ENCODE measurements at regions of chr12 and their contacts with region 1.

Region 1: DNA sequence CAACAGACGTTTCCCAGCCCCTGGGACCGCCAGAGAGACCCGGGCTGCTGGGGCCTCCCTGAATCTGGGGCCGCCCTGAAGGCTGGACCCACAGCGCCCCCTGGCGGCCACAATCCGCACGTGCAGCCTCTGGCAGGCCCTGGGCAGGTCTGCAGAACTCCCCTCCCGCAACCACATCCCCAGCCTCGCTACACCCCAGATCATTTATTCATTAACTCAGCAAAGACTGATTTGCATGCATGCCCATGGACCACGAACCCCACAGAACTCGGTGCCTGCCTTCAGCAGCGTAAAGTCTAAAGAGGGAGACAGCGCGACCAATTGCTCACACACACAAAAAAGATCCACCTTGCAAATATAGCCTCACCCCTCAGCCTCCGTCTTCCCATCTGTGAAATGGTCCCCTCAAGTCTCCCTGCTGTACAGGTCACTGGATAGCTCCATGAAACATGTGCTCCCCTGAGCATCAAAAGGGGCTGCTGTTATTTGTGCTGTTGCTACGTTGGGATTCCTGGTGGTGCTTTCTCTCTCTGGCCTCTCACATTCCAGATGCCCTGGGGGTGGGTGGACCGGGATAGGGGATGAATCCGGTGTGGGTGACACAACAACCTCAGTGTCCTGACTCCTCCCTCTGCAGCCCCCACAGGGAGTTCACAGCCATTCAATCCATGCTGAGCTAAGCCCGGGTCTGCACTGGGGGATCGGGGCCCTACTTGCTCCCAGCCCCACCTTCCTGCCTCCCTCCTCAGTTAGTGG is 96.4 kb downstream of the SCARB1 start:
- DNase-seq: peak; percentile 90
- ATAC-seq: peak; percentile 81

Region 2: DNA sequence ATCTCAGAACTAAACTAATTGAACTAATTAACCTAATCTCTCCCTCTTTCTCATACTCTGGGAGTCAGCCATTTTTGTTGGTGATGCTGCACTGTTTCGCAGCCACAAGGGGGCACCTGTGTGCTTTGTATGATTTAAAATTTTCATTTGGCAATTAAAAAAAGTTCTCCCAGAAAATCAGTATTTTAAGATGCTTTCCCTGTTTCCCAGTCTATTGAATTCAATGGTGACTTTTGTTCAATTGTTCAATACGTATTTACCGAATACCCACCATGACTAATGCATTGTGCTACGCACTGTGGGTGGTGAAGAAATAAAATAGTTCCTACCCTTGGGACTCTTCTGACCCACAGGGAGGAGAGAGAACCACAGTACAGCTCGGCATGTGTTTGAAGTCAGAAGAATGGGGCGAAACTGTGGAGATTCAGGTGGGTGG is 730.6 kb before region 1 on chr12:
- intact Hi-C with region 1: loop called (anchors 2 kb)
- DNase-seq: no peak
- ATAC-seq: peak; percentile 61

Region 3: GRCh38 chr12:124053851-124054250 is 713.4 kb before region 1 on chr12:
- intact Hi-C with region 1: loop called (anchors 5 kb)
- DNase-seq: no peak
- ATAC-seq: peak; percentile 94

Region 4: DNA sequence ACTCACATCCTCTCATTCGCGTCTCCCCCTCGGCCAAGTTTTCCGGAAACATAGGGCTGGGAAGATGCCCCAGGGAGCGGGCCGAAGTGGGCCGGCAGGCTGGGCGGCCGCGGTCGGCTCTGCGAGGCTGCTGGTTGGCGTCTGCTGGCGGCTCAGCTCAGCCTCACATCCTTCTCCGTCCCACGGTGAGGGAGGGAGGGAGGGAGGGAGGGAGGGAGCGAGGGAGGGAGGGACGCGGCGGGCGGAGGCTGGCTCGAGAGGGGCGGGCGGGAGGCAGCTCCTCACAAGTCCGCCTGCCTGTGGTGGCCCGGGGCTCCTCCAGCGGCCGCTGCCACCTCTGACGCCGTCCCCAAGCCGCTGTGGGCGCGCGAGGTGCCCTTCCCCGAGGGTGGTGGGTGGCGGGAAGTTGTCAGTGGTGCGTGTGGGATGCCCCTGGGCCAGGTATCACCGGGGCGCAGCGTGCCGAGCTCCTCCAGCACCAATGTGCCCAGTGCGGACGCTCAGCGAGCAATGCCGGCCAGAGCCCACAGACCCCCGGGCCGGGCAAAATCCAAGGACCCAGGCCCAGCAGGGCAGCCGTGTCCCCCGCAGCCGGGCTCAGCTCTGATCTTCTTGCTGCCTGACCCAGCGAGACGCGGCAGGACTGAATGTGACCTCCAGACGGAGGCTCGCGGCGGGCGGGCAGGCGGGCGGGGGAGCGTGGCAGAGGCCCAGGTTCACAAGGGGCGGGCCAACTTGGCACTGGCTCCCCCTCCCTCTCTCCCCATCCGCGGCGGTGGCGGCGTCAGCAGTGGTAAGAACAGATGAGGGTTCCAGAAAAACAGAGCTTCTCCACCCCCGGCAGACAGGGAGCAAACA is 378.3 kb before region 1 on chr12:
- intact Hi-C with region 1: loop called (anchors 10 kb)
- DNase-seq: peak; percentile 93
- ATAC-seq: peak; percentile 71

Region 5: DNA sequence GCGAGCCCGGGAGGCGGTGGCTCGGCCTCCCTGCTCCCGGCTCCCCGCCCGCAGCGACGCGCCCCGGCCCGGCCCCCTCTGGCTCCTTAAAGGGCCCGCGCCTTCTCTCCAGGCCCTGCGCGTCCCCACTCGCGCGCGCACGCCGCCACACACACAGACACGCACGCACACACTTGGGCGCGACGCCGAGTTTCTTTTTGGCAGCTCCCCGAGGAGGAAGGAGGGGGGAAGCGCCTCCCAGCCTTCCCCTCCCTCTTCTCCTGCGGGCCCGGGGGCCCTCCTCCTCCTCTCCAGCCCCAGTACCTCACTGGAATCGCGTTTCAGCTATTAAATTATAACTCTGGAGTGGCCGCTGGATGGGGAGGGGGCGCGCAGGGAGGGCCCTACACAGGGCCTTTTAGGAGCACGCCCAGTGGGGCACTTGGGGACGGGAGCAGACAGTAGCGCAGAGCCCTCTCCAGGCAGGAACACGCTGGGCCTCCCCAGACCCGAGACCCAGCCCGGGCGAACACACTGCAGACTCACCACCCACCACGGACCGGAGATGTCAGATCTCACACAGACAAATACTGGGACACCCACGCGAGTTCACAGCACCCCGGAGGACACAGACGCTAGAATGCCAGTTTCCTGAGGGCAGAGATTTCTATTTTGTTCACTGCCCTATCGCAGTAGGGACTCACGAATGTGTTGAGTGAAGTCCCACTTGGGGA is 199.4 kb before region 1 on chr12:
- intact Hi-C with region 1: loop called (anchors 5 kb)
- DNase-seq: peak; percentile 98
- ATAC-seq: peak; percentile 87

Region 6: GRCh38 chr12:124713436-124714082 is 53.7 kb before region 1 on chr12:
- intact Hi-C with region 1: no loop called
- DNase-seq: no peak
- ATAC-seq: peak; percentile 71

Measured in Right ventricle myocardium superior (tissue), 1 donor.